ENCODE measurements at regions of chr1 and their contacts with region 1.

Region 1: DNA sequence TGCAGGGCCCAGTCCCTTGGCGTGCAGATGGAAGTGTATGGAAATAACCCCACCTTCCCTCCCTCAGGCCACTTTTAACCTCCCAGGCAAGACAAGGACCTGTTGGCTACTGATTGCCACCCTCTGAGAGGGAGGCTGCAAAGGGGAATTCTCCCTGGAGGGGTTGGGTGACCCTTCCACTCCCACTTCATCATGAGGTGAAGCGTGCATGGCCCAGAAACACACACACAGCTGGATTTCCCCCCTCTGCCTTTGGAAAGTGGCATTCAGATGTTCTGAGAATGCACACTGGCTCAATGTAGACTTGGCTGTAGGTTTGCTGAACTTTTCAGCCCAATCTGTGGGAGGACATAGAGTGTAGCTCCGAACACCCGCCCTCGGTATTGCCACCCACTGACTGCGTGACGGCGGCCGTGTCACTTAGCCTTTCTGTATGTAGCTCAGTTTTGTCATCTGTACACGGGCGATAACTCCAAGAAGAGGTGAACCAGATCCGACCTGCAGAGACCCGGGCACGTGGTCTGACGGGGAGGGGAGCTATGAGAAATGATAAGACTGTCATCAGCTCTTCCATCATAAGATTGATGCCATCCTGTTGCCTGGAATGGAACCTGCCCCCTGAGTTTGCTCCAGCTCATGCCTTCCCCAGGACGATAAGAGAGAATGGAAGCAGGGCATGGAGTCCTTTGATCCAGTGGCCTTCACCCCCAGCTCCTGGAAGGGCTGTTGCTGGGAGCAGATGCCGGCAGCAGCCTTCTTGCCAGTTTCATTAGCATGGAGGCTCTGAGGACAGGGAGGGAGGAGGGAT is 19.3 kb downstream of the MIIP start:
- DNase-seq: no peak
- H3K4me3 ChIP-seq: no peak overlapping the region
- H3K27ac ChIP-seq: no peak overlapping the region
- H3K4me1 ChIP-seq: no peaks in the 10 kb centered on the region
- H3K27me3 ChIP-seq: no peaks in the 10 kb centered on the region
- CTCF ChIP-seq: no peak

Region 2: DNA sequence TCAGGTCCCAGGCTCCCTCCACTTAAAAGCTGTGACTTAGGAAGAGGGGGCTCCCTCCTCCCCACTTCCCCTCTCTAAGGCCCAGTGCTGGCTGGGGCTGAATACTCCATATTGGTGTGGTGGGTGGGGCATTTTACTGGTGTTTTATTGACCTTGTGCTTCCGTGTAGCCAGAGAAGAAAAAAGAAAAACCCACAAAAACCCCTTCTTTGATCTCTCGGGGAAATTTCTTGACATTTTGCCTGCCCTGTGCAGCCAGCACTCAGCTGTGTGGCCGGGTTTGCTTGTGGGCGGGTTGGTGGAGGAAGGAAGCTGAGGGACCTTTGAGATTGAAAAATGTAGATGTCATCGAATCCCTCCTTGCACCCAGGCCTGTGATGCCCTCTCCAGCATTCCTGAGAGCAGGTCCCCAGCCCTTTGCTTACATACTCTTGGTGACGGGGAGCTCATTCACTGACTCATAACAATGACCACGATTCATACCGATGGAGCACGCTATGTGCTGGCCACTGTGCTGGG is 49.3 kb after region 1 on chr1:
- CTCF ChIA-PET with region 1: no interaction called
- dilution Hi-C with region 1: loop called (anchors 5 kb)
- in situ Hi-C with region 1: no loop called
- intact Hi-C with region 1: no loop called
- DNase-seq: no peak
- H3K4me3 ChIP-seq: no peak overlapping the region
- H3K27ac ChIP-seq: no peak overlapping the region
- H3K4me1 ChIP-seq: no peaks in the 10 kb centered on the region
- H3K27me3 ChIP-seq: no peaks in the 10 kb centered on the region
- CTCF ChIP-seq: no peak